Caco-2 (cell line): ENCODE measurements at regions of chr2 and their contacts with region 1.

Region 1: GRCh38 chr2:179669196-179669595 is 192.2 kb downstream of the ZNF385B start:
- DNase-seq: peak; percentile 64 to 76
- H3K4me3 ChIP-seq: no peak overlapping the region
- H3K4me3 Mint-ChIP-seq: no peak overlapping the region
- H3K27ac Mint-ChIP-seq: peak overlapping the region; percentile 89
- H3K4me1 ChIP-seq: peaks cover 40% of the 10 kb centered on the region
- H3K4me1 Mint-ChIP-seq: peaks cover 7% of the 10 kb centered on the region
- H3K27me3 ChIP-seq: no peaks in the 10 kb centered on the region
- H3K27me3 Mint-ChIP-seq: no peaks in the 10 kb centered on the region
- CTCF ChIP-seq: no peak

Region 2: DNA sequence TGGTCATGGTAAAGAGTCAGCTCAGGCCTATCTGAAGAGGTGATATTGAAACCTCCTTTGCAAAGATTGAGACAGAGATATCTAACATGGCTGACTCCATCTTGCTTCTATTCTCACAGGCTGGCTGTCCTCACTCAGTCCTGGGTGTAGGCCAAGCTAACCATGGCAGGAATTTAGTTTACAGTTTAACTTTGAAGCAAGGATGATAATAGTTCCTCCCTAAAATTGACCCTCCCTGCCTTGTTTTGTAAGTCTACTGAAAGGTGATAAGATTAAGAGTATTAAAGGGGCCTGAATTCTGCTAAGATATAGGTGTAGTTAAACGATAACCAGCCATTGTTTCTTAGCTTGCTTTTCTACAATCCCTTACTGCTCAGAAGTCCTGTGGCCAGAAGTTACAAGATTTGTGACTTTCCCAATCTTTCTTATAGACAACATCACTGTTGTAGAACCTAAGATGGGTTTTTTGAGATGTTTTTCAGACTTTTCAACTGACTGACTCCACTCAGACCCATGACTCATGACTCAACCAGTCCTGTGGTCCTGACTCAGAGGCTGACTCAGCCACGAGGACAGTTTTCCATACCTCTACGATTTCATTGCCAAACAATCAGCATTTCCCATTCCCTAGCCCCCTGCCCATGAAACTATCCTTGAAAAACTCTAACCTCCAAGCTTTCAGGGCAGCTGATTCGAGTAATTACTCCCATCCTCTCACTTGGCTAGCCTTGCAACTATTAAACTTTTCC is 208.8 kb before region 1 on chr2:
- CTCF ChIA-PET with region 1: no interaction called
- POLR2A ChIA-PET with region 1: no interaction called
- intact Hi-C with region 1: no loop called
- DNase-seq: peak; percentile 46 to 57
- H3K4me3 ChIP-seq: no peak overlapping the region
- H3K4me3 Mint-ChIP-seq: no peak overlapping the region
- H3K27ac Mint-ChIP-seq: peak overlapping the region; percentile 87
- H3K4me1 ChIP-seq: peaks cover 27% of the 10 kb centered on the region
- H3K4me1 Mint-ChIP-seq: peaks cover 11% of the 10 kb centered on the region
- H3K27me3 ChIP-seq: no peaks in the 10 kb centered on the region
- H3K27me3 Mint-ChIP-seq: no peaks in the 10 kb centered on the region
- CTCF ChIP-seq: no peak

Region 3: GRCh38 chr2:179595284-179595683 is 73.9 kb before region 1 on chr2:
- CTCF ChIA-PET with region 1: no interaction called
- POLR2A ChIA-PET with region 1: no interaction called
- intact Hi-C with region 1: loop called (anchors 1 kb)
- DNase-seq: peak; percentile 28 to 44
- H3K4me3 ChIP-seq: no peak overlapping the region
- H3K4me3 Mint-ChIP-seq: no peak overlapping the region
- H3K27ac Mint-ChIP-seq: no peak overlapping the region
- H3K4me1 ChIP-seq: no peaks in the 10 kb centered on the region
- H3K4me1 Mint-ChIP-seq: no peaks in the 10 kb centered on the region
- H3K27me3 ChIP-seq: no peaks in the 10 kb centered on the region
- H3K27me3 Mint-ChIP-seq: no peaks in the 10 kb centered on the region
- CTCF ChIP-seq: peak in 1 of 2 experiments; percentile 10

Region 4: DNA sequence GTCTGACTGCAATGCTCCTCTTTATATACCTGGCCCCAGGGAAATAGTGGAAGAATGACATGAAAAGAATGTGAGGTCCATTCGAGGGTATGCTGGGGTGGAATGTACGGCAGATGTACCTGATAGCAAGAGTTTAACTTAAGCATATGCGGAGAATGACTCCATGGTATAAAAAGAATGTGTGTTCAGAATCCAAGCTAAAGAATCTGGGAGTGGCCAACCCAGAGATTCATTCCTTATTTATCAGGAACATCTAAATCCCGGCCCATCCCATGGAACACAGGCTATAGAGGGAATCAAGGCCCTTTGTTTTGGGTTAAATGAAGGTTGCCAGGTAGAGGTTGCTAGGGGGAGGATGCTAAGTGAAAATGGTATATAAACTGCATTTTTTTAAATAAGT is 42.2 kb after region 1 on chr2:
- CTCF ChIA-PET with region 1: no interaction called
- POLR2A ChIA-PET with region 1: no interaction called
- intact Hi-C with region 1: loop called (anchors 2 kb)
- DNase-seq: peak; percentile 60 to 70
- H3K4me3 ChIP-seq: no peak overlapping the region
- H3K4me3 Mint-ChIP-seq: no peak overlapping the region
- H3K27ac Mint-ChIP-seq: peak overlapping the region; percentile 46
- H3K4me1 ChIP-seq: peaks cover 35% of the 10 kb centered on the region
- H3K4me1 Mint-ChIP-seq: peaks cover 25% of the 10 kb centered on the region
- H3K27me3 ChIP-seq: no peaks in the 10 kb centered on the region
- H3K27me3 Mint-ChIP-seq: no peaks in the 10 kb centered on the region
- CTCF ChIP-seq: no peak

Region 5: GRCh38 chr2:179741317-179741716 is 72.1 kb after region 1 on chr2:
- CTCF ChIA-PET with region 1: no interaction called
- POLR2A ChIA-PET with region 1: no interaction called
- intact Hi-C with region 1: loop called (anchors 5 kb)
- DNase-seq: no peak
- H3K4me3 ChIP-seq: no peak overlapping the region
- H3K4me3 Mint-ChIP-seq: no peak overlapping the region
- H3K27ac Mint-ChIP-seq: no peak overlapping the region
- H3K4me1 ChIP-seq: no peaks in the 10 kb centered on the region
- H3K4me1 Mint-ChIP-seq: no peaks in the 10 kb centered on the region
- H3K27me3 ChIP-seq: no peaks in the 10 kb centered on the region
- H3K27me3 Mint-ChIP-seq: peaks cover 5% of the 10 kb centered on the region
- CTCF ChIP-seq: no peak

Region 6: GRCh38 chr2:179764710-179765109 is 95.5 kb after region 1 on chr2:
- CTCF ChIA-PET with region 1: no interaction called
- POLR2A ChIA-PET with region 1: no interaction called
- intact Hi-C with region 1: no loop called
- DNase-seq: no peak
- H3K4me3 ChIP-seq: no peak overlapping the region
- H3K4me3 Mint-ChIP-seq: no peak overlapping the region
- H3K27ac Mint-ChIP-seq: no peak overlapping the region
- H3K4me1 ChIP-seq: no peaks in the 10 kb centered on the region
- H3K4me1 Mint-ChIP-seq: no peaks in the 10 kb centered on the region
- H3K27me3 ChIP-seq: no peaks in the 10 kb centered on the region
- H3K27me3 Mint-ChIP-seq: peaks cover 24% of the 10 kb centered on the region
- CTCF ChIP-seq: no peak